ENCODE measurements at regions of chr2 and their contacts with region 1.

Region 1: GRCh38 chr2:218033590-218034496 is 31.0 kb upstream of the TNS1 start:
- DNase-seq: peak in 2 of 14 experiments; percentile 23 to 27
- ATAC-seq: no peak
- H3K4me3 ChIP-seq: peak overlapping the region; percentile 46
- H3K4me3 Mint-ChIP-seq: peak overlapping the region; percentile 76
- H3K27ac ChIP-seq: no peak overlapping the region
- H3K27ac Mint-ChIP-seq: peak overlapping the region; percentile 22
- H3K4me1 ChIP-seq: peaks cover 19% of the 10 kb centered on the region
- H3K4me1 Mint-ChIP-seq: peaks cover 11% of the 10 kb centered on the region
- H3K27me3 ChIP-seq: peaks cover 0 to 4% of the 10 kb centered on the region in 2 experiments
- H3K27me3 Mint-ChIP-seq: peaks cover 7% of the 10 kb centered on the region
- CTCF ChIP-seq: no peak

Region 2: DNA sequence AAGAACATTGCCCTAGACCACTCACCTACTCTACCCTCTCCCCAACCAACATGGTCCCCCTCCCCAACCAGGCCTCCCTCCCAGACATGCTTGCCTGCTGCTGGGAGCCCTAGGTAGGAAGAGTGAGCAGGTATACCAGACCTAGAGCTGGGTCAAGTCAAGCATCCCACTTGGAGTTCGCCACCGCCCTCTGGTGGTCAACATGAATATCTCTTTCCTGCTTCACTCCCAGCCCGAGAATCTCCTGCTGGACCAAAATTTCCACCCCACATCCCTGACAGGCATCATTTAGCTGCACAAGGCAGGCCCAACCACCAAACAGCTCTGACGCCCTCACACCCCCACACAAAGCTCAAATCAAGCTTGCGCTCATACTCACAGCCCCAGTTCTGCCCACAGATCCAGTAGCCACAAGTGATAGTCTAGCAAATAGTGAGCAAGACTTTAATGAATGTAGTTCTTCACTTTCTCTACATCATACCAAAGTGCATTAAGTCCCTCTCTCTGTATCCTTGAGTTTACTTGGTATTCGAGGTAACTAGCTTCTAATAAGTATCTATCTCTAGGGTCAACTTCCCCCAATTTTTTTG is 147.0 kb before region 1 on chr2:
- CTCF ChIA-PET with region 1: no interaction called
- POLR2A ChIA-PET with region 1: no interaction called
- intact Hi-C with region 1: loop called in 1 of 2 experiments (anchors 10 kb)
- DNase-seq: peak; percentile 26 to 75 (median 48)
- ATAC-seq: peak; percentile 37
- H3K4me3 ChIP-seq: no peak overlapping the region
- H3K4me3 Mint-ChIP-seq: no peak overlapping the region
- H3K27ac ChIP-seq: no peak overlapping the region
- H3K27ac Mint-ChIP-seq: no peak overlapping the region
- H3K4me1 ChIP-seq: peaks cover 3% of the 10 kb centered on the region
- H3K4me1 Mint-ChIP-seq: no peaks in the 10 kb centered on the region
- H3K27me3 ChIP-seq: peaks cover 0 to 4% of the 10 kb centered on the region in 2 experiments
- H3K27me3 Mint-ChIP-seq: peaks cover 4% of the 10 kb centered on the region
- CTCF ChIP-seq: peak; percentile 71

Region 3: DNA sequence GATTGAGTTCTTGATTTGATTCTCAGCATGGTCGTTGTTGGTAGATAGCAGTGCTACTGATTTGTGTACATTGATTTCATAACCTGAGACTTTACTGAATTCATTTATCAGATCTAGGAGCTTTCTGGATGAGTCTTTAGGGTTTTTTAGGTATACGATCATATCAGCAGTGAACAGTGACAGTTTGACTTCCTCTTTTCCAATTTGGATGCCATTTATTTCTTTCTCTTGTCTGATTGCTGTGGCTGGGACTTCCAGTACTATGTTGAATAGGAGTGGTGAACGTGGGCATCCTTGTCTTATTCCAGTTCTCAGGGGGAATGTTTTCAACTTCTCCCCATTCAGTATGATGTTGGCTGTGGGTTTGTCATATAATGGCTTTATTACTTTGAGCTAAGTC is 64.1 kb after region 1 on chr2:
- CTCF ChIA-PET with region 1: no interaction called
- POLR2A ChIA-PET with region 1: no interaction called
- intact Hi-C with region 1: no loop called
- DNase-seq: no peak
- ATAC-seq: no peak
- H3K4me3 ChIP-seq: no peak overlapping the region
- H3K4me3 Mint-ChIP-seq: no peak overlapping the region
- H3K27ac ChIP-seq: no peak overlapping the region
- H3K27ac Mint-ChIP-seq: no peak overlapping the region
- H3K4me1 ChIP-seq: no peaks in the 10 kb centered on the region
- H3K4me1 Mint-ChIP-seq: no peaks in the 10 kb centered on the region
- H3K27me3 ChIP-seq: no peaks in the 10 kb centered on the region
- H3K27me3 Mint-ChIP-seq: peaks cover 3% of the 10 kb centered on the region
- CTCF ChIP-seq: no peak

Measured in CD4-positive, alpha-beta T cell (primary cell).